GM12878 (cell line): ENCODE measurements at regions of chr1 and their contacts with region 1.

Region 1: DNA sequence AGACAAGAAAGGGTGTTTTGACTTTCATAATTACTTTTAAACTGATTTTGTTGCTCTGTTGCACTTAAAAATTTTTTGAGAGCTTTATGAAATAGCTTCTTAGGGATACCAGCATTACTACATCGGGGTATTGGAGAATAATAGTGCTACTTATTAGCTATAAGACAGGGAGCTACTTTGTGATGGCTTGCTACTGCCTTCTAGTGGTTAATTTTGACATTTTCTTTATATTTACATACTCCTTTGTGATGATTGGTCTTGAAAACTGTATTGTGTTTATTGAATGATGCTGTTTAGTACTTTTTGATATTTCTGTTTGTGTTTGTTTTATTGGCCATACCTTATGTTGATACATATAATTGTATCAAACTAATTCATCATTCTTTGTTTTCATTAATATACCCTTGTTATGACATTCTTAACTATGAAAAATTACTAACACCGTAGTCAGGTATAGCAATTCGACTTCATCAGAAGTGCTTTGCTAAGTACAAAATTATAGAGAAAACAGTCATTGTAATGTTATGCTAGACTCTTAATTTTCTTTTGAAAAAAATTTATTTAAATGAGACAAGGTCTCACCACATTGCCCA is 85.5 kb downstream of the CLIC4 start:
- DNase-seq: no peak
- ATAC-seq: peak; percentile 94
- H3K4me3 ChIP-seq: no peak overlapping the region
- H3K27ac ChIP-seq: no peak overlapping the region
- H3K4me1 ChIP-seq: peaks cover 3% of the 10 kb centered on the region; the same call in 1 of the 2 replicates
- H3K27me3 ChIP-seq: no peaks in the 10 kb centered on the region
- CTCF ChIP-seq: peak; percentile 70 to 89 (median 79)
- EP300 ChIP-seq: no peak
- POLR2A ChIP-seq: no peak
- RAD21 ChIP-seq: peak; percentile 88

Region 2: DNA sequence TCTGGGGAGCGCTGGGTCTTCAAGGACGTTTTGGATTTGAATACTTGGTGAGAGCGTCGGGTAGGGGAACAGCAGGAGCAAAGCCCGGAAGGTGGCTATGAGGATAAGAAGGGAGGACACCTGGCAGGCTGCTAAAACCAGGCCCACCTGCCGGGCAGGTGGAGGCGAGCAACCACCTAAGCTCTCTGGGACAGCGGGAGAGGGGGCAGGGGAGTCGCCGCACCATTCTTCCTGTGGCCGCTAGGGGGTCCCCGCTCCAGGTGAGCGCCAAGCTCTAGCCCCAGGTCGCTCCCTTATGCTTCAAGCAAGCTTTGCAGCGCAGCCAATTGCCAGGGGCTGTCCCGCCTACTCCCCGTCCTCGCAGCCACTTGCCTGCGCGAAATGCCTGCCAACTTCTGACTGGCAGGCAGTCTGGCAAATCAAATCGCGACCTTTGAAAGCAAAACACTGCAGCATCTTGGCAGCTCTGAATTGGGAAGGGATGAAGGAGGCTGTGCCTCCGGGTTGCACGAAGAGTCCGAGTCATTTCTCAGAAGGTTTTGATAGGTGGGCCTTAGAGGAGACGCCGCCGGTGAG is 415.4 kb before region 1 on chr1 and contains the start of gene NIPAL3:
- CTCF ChIA-PET with region 1: interaction called, 4 read pairs
- POLR2A ChIA-PET with region 1: no interaction called
- RAD21 ChIA-PET with region 1: interaction called, 11 read pairs
- SMC1A ChIA-PET with region 1: interaction called, 3 read pairs
- in situ Hi-C with region 1: no loop called
- intact Hi-C with region 1: no loop called
- DNase-seq: peak; percentile 98
- ATAC-seq: peak; percentile 99
- H3K4me3 ChIP-seq: peak within 1 kb of the TSS; percentile 80
- H3K27ac ChIP-seq: 0 out of 2 replicates have a peak within 1 kb of the TSS, but pooled peaks have one; percentile 0
- H3K4me1 ChIP-seq: peaks cover 9% of the 10 kb centered on the region
- H3K27me3 ChIP-seq: no peaks in the 10 kb centered on the region
- CTCF ChIP-seq: peak; percentile 91 to 95 (median 94)
- EP300 ChIP-seq: no peak
- POLR2A ChIP-seq: peak; percentile 40; the same call in 1 of the 2 replicates
- RAD21 ChIP-seq: peak; percentile 49
- polyA plus RNA-seq, gene NIPAL3: 2.1 TPM

Region 3: DNA sequence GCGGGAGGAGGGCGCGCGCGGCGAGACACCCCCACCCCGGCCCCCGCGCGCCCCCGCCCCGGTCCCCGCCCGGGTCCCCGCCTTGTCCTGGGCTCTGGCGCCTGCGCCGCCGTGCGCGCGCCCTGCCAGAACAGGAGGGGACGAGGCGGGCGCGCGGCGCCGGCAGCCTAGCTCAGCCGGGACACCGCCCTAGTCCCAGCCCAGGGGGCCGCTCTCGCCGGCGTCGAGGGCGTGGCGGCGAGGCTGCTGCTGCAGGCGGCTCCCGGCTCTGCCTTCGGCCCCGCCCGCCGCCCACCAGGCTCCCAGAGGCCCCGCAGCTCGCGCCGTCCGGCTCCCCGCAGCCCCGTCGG is 328.1 kb before region 1 on chr1 and contains the start of gene RCAN3:
- CTCF ChIA-PET with region 1: no interaction called
- POLR2A ChIA-PET with region 1: no interaction called
- RAD21 ChIA-PET with region 1: no interaction called
- SMC1A ChIA-PET with region 1: no interaction called
- in situ Hi-C with region 1: no loop called
- intact Hi-C with region 1: no loop called
- DNase-seq: no peak
- ATAC-seq: peak; percentile 79
- H3K4me3 ChIP-seq: peak within 1 kb of the TSS; percentile 80; the same call in 1 of the 2 replicates
- H3K27ac ChIP-seq: no peak within 1 kb of the TSS
- H3K4me1 ChIP-seq: peaks cover 8% of the 10 kb centered on the region
- H3K27me3 ChIP-seq: peaks cover 12 to 20% of the 10 kb centered on the region in 2 experiments
- CTCF ChIP-seq: no peak
- EP300 ChIP-seq: no peak
- POLR2A ChIP-seq: no peak
- RAD21 ChIP-seq: no peak
- polyA plus RNA-seq, gene RCAN3: 0.02 TPM

Region 4: DNA sequence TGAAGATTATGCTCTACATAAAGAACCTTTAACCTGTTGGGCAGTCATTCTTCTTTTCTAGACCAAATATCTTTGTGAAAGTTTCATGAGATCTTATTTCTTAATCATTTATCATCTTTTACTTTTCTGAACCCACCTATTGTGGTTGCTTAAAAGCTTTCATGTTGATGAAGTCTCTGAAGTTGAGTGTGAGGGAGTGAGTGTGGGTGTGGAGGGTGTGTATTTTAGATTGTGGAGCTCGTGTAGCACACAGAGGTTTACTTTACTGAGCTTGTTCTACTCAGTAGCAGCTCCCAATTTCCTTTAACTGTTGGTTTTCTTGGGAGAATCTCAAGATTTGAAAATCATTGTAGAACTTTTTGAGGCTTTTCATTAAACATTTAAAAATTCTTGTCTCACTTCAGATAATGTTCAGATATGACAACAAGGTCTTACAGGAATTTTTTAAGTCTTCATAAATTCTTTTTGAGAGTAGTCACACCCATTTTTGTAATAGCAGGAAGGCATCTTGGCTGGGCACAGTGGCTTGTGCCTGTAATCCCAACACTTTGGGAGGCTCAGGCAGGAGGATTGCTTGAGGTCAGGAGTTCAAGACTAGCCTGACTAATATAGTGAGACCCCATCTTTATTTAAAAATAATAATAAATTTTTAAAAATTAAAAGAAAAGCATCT is 170.6 kb before region 1 on chr1:
- CTCF ChIA-PET with region 1: interaction called, 16 read pairs
- POLR2A ChIA-PET with region 1: no interaction called
- RAD21 ChIA-PET with region 1: interaction called, 10 read pairs
- SMC1A ChIA-PET with region 1: interaction called, 13 read pairs
- in situ Hi-C with region 1: no loop called
- intact Hi-C with region 1: no loop called
- DNase-seq: no peak
- ATAC-seq: no peak
- H3K4me3 ChIP-seq: no peak overlapping the region
- H3K27ac ChIP-seq: no peak overlapping the region
- H3K4me1 ChIP-seq: no peaks in the 10 kb centered on the region
- H3K27me3 ChIP-seq: no peaks in the 10 kb centered on the region
- CTCF ChIP-seq: no peak
- EP300 ChIP-seq: no peak
- POLR2A ChIP-seq: no peak
- RAD21 ChIP-seq: no peak

Region 5: DNA sequence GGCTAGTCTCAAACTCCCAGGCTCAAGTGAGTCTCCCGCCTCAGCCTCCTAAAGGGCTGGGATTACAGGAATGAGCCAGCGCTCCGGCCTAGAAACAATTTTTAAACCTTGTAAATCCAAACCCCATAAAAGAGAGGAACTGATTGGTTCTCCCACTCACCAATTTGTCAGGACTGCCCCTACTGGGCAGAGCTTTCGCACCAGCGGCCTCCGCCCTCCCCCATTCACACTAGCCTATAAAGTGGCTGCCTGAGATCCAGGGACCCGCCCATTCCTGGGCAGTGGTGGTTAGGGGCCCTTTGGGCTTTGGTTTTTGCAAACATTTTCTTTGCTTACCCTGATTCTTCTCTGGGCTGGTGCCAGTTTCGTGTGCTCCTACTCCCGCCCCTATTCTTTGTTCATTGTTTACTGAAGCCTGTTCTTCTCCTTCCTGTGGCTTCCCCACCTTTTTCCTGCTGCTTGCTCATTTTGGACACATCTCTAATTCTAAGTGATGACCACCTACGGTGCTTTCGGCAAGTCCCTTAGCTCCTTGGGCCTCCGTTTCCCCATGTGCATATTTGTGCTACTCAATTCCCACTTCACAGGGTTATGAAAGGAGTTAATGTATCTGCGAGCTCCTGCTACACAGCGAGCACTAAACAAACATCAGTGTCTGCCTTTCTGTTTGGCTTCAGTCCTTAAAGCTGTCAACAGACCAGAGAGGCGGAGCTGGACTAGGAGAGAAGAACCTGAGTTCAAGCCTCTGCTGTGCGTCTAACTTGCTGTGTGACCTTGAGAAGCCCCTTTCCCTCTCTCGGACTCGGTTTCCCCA is 125.3 kb before region 1 on chr1:
- CTCF ChIA-PET with region 1: interaction called, 655 read pairs
- POLR2A ChIA-PET with region 1: interaction called, 6 read pairs
- RAD21 ChIA-PET with region 1: interaction called, 12 read pairs
- SMC1A ChIA-PET with region 1: interaction called, 5 read pairs
- in situ Hi-C with region 1: no loop called
- intact Hi-C with region 1: no loop called
- DNase-seq: peak; percentile 82
- ATAC-seq: peak; percentile 99
- H3K4me3 ChIP-seq: peak overlapping the region; percentile 8; the same call in 1 of the 2 replicates
- H3K27ac ChIP-seq: no peak overlapping the region
- H3K4me1 ChIP-seq: peaks cover 3% of the 10 kb centered on the region
- H3K27me3 ChIP-seq: no peaks in the 10 kb centered on the region
- CTCF ChIP-seq: no peak
- EP300 ChIP-seq: no peak
- POLR2A ChIP-seq: no peak
- RAD21 ChIP-seq: no peak

Region 6: DNA sequence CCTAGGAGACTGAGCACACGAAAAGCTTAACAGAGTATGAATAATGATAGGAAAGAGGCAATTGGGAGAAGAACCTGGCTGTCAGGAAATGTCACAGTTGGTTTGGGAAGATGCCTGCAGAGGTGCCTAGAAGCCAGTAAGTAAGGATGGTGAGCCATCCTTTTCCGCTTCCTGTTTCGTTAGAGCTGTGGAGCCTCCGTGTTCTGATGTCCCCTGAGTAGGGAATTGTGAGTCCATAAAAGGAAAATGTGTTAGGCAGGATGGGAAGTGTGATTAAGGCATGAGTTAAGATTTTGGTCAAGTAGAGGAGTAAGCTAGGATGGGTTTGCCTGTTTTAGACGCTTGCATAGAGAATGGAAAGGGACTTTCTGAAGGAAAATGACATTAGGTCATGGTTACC is 76.5 kb before region 1 on chr1:
- CTCF ChIA-PET with region 1: interaction called, 18 read pairs
- POLR2A ChIA-PET with region 1: interaction called, 7 read pairs
- RAD21 ChIA-PET with region 1: interaction called, 29 read pairs
- SMC1A ChIA-PET with region 1: interaction called, 21 read pairs
- in situ Hi-C with region 1: no loop called
- intact Hi-C with region 1: loop called (anchors 2 kb)
- DNase-seq: no peak
- ATAC-seq: no peak
- H3K4me3 ChIP-seq: no peak overlapping the region
- H3K27ac ChIP-seq: no peak overlapping the region
- H3K4me1 ChIP-seq: peaks cover 7% of the 10 kb centered on the region; the same call in 1 of the 2 replicates
- H3K27me3 ChIP-seq: no peaks in the 10 kb centered on the region
- CTCF ChIP-seq: no peak
- EP300 ChIP-seq: no peak
- POLR2A ChIP-seq: no peak
- RAD21 ChIP-seq: no peak

Region 7: GRCh38 chr1:24847995-24848881 is 17.5 kb after region 1 on chr1:
- CTCF ChIA-PET with region 1: interaction called, 10 read pairs
- POLR2A ChIA-PET with region 1: no interaction called
- RAD21 ChIA-PET with region 1: interaction called, 6 read pairs
- SMC1A ChIA-PET with region 1: interaction called, 5 read pairs
- in situ Hi-C with region 1: no loop called
- intact Hi-C with region 1: no loop called
- DNase-seq: peak; percentile 71
- ATAC-seq: peak; percentile 97
- H3K4me3 ChIP-seq: peak overlapping the region; percentile 56; the same call in 1 of the 2 replicates
- H3K27ac ChIP-seq: no peak overlapping the region
- H3K4me1 ChIP-seq: no peaks in the 10 kb centered on the region
- H3K27me3 ChIP-seq: no peaks in the 10 kb centered on the region
- CTCF ChIP-seq: peak; percentile 93 to 99 (median 98)
- EP300 ChIP-seq: no peak
- POLR2A ChIP-seq: peak; percentile 84
- RAD21 ChIP-seq: peak; percentile 93

Region 8: DNA sequence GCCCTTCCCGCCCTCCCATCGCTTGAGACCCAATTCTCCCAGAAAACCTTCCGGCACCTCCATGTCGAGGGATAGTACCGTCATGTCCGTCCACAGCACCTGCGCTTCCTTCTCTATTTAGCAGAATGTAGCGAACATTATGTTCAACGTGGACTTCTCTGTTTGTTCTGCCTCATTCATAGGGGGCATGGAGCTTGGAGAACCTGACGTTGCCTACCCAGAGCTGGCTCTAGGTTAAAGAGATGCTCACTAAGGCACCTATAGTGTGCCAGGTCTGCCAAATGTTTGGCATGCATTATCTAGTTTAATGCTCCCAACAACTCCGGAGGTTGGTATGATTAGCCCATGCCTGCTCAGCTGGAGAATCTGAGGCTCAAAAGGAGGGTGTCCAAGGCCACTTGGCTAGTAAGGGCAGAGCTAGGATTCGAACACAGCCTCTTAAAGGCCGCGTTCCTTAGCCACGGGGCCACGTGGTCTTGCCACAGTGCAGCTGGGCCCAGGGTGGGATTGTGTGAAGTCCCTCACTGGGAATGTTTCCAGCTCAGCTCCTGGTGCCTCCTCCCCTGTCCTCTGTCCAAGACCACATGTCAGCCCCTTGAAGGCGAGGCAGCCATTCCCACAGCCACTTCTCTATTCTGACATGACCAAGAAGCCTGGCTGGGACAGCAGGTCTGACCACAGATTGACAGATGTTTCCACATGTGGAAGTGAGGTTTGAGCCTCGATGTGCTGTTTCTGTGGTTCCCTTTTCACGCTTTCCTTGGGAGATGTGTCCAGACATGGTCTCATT is 41.5 kb after region 1 on chr1:
- CTCF ChIA-PET with region 1: no interaction called
- POLR2A ChIA-PET with region 1: no interaction called
- RAD21 ChIA-PET with region 1: no interaction called
- SMC1A ChIA-PET with region 1: no interaction called
- in situ Hi-C with region 1: no loop called
- intact Hi-C with region 1: no loop called
- DNase-seq: no peak
- ATAC-seq: no peak
- H3K4me3 ChIP-seq: no peak overlapping the region
- H3K27ac ChIP-seq: no peak overlapping the region
- H3K4me1 ChIP-seq: peaks cover 7% of the 10 kb centered on the region
- H3K27me3 ChIP-seq: peaks cover 2 to 6% of the 10 kb centered on the region in 2 experiments
- CTCF ChIP-seq: no peak
- EP300 ChIP-seq: no peak
- POLR2A ChIP-seq: no peak
- RAD21 ChIP-seq: no peak

Region 9: DNA sequence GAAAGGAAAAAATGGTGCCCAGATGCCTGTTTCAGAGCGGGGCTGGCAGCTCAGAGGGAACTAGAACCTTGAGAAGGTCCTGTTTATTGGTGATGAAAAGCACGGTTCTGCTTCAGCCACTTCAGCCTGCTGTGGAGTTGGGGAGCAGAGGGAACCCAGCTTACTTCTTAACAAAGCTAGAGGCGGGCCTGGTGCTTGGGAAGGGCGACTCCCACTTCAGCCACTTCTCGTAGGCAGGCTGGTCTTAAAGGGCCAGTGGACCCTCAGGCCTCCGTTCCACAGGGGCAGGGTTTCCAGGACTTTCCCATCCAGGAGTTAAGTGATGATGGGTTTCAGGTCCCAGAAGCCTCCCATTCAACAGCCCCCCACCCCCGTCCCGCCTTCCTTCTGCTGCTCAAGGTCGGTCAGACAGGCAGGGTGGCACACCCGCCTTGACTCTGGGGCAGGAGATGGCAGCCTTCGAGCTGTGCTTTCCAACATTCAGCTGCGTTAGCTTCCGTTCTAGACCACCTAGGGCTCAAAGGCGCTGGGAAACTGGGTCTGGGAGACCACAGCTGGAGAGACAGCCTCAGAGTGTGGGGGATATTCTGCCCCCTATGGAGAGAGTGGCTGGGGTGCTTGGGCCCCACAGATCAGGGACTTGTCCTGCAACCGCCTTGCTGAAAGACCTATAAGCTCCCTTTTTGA is 95.9 kb after region 1 on chr1:
- CTCF ChIA-PET with region 1: no interaction called
- POLR2A ChIA-PET with region 1: no interaction called
- RAD21 ChIA-PET with region 1: no interaction called
- SMC1A ChIA-PET with region 1: no interaction called
- in situ Hi-C with region 1: no loop called
- intact Hi-C with region 1: no loop called
- DNase-seq: no peak
- ATAC-seq: peak; percentile 6; the same call in 2 of the 3 replicates
- H3K4me3 ChIP-seq: peak overlapping the region; percentile 99
- H3K27ac ChIP-seq: peak overlapping the region; percentile 89
- H3K4me1 ChIP-seq: peaks cover 59% of the 10 kb centered on the region
- H3K27me3 ChIP-seq: no peaks in the 10 kb centered on the region
- CTCF ChIP-seq: peak in 2 of 3 experiments; percentile 15 to 26; a peak in 2 of 6 replicates
- EP300 ChIP-seq: no peak
- POLR2A ChIP-seq: peak; percentile 30; the same call in 1 of the 2 replicates
- RAD21 ChIP-seq: no peak